Motor neuron (in vitro differentiated cells): ENCODE measurements at regions of chr2 and their contacts with region 1.

Region 1: GRCh38 chr2:1140389-1141003 is 189.8 kb downstream of the SNTG2 start:
- ATAC-seq: peak in 4 of 8 experiments; percentile 35 to 86 (median 62)
- H3K4me3 ChIP-seq: no peak overlapping the region
- H3K27ac ChIP-seq: no peak overlapping the region
- H3K4me1 ChIP-seq: no peaks in the 10 kb centered on the region

Region 2: GRCh38 chr2:854460-854859 is 286.0 kb before region 1 on chr2:
- in situ Hi-C with region 1: no loop called
- ATAC-seq: peak in 2 of 8 experiments; percentile 28 to 66
- H3K4me3 ChIP-seq: no peak overlapping the region
- H3K27ac ChIP-seq: no peak overlapping the region
- H3K4me1 ChIP-seq: peaks cover 0 to 5% of the 10 kb centered on the region in 2 donors

Region 3: DNA sequence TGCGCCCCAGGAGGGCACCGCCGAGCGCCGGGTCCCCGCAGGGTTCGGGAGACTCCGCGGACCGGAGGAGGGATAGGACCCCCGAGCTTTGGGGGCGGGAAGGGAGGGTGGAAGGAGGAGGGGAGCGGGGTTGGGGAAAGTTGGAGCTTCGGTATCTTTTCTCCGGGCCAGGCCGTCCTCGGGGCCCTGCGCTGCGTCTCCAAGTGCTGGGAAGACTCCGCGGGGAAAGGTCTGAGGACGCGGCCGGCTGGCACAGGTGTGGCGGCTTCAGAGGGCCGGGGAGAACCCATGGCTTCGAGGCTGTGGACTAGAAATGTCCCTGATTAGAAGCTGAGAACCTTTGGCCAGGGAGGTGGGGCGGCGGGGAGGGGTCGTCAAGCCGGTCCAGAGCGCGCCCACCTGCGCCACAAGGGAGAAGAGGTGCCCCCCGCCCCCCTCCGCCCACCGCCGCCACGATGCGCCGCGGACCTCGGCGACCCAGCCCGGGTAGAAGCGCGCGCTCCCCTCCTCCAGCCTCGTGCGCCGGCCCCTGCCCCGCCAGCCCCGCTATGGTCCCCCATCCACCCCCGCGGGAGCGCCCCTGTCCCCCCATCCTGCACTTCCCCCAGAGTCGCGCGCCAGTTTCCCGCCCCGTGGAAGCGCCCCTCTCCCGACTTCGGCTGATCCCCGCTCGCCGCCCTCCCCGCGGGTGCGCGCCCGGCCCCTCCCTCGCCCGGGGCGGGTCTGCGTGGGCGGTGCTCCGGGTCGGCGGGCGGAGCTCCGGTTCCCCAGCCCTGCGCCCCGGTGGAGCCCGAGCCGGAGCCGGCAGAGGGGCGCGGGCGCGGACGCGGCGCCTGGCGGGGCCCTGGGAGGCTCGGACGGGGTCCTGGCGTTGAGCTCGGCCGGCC is 190.2 kb before region 1 on chr2 and contains the start of gene SNTG2:
- in situ Hi-C with region 1: loop called in 2 of 9 experiments (anchors 25 kb)
- ATAC-seq: peak; percentile 70 to 91 (median 88)
- H3K4me3 ChIP-seq: peak within 1 kb of the TSS; percentile 37 to 79 (median 66)
- H3K27ac ChIP-seq: no peak within 1 kb of the TSS
- H3K4me1 ChIP-seq: no peaks in the 10 kb centered on the region
- total RNA-seq, gene SNTG2: 0.21 to 2.8 (median 1.1) TPM